Heart right ventricle (tissue), 16 donors: ENCODE measurements at regions of chr1 and their contacts with region 1.

Region 1: DNA sequence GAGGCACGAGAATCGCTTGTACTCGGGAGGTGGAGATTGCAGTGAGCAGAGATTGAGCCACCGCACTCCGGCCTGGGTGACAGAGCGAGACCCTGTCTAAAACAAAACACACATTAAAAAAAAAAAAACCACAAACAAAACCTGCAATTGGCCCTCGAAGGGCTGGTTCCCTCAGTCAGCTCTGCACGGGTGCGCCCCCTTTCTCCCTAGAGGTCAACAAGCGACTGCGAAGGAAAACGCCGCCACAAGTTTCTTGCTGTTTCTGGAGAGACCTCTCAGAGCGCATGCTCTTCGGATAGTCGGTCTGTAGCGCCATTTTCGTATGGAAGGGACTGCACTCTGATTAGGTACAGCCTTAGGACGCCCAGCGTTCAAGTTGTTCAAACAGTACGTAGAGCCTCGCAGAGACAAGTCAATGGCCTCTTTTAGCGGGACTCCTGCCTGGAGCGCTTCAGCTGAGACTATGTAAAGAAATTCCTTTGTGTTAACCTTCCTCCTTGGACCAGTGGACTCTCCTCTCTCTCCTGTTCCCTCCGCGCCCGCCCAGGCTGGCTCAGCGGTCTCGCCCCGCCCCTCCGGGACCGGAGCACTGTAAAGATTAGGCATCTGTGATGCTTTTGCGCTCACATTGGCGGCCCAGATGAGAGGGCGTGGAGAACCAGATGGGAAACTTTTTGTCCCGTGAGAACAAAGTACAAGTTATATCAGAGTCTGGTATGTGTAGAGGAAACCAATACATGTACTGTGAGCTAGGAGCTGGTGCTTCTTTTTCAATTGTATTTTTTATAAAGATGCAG is 1.0 kb upstream of the CDC14A start:
- DNase-seq: peak; percentile 86 to 87
- ATAC-seq: peak; percentile 63 to 88 (median 83)
- H3K4me3 ChIP-seq: peak overlapping the region; percentile 67 to 97 (median 90)
- H3K27ac ChIP-seq: peak overlapping the region; percentile 57 to 95 (median 89)
- H3K4me1 ChIP-seq: peaks cover 3 to 36% (median 32%) of the 10 kb centered on the region in 9 donors
- H3K27me3 ChIP-seq: no peaks in the 10 kb centered on the region
- CTCF ChIP-seq: peak in 7 of 9 donors; percentile 33 to 63 (median 45)

Region 2: DNA sequence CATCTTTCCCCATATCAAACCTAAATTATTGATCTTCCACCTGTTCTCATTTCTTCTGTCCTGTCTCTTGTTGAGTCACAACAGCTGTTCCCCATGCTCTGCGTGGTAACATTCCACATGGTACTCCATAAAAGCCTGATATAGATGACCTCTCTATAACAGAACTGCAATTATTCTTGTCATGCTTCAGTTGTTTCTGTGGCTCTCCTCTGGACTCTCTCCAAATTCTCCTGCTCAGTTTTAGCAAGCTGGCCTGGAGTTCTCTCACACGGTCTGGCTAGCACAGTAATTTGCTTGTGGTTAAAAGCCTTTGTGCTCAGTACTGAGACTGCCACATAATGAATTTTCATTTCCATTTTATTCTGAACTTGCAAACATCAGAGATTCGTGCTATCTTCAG is 162.7 kb before region 1 on chr1:
- intact Hi-C with region 1: no loop called
- DNase-seq: peak in 1 of 2 donors; percentile 40
- ATAC-seq: peak; percentile 80 to 94 (median 86)
- H3K4me3 ChIP-seq: peak overlapping the region in 1 of 10 donors; percentile 7
- H3K27ac ChIP-seq: peak overlapping the region; percentile 57 to 91 (median 76)
- H3K4me1 ChIP-seq: peaks cover 0 to 21% (median 8%) of the 10 kb centered on the region in 9 donors
- H3K27me3 ChIP-seq: no peaks in the 10 kb centered on the region
- CTCF ChIP-seq: no peak

Region 3: GRCh38 chr1:100265931-100266740 is 85.2 kb before region 1 on chr1 and contains the start of gene RTCA:
- intact Hi-C with region 1: loop called in 3 of 10 experiments (anchors 1 to 10 kb)
- DNase-seq: peak; percentile 96 to 98
- ATAC-seq: peak; percentile 99 to 100 (median 100)
- H3K4me3 ChIP-seq: peak within 1 kb of the TSS; percentile 59 to 99 (median 96)
- H3K27ac ChIP-seq: peak within 1 kb of the TSS in 9 of 10 donors; percentile 79 to 97 (median 88)
- H3K4me1 ChIP-seq: peaks cover 4 to 42% (median 35%) of the 10 kb centered on the region in 9 donors
- H3K27me3 ChIP-seq: no peaks in the 10 kb centered on the region
- CTCF ChIP-seq: no peak
- total RNA-seq, gene RTCA: 30.1 to 44.8 (median 36.9) TPM

Region 4: GRCh38 chr1:100396651-100397050 is 45.4 kb after region 1 on chr1:
- intact Hi-C with region 1: loop called in 2 of 10 experiments (anchors 5 kb)
- DNase-seq: no peak
- ATAC-seq: no peak
- H3K4me3 ChIP-seq: no peak overlapping the region
- H3K27ac ChIP-seq: peak overlapping the region in 1 of 10 donors; percentile 73
- H3K4me1 ChIP-seq: peaks cover 0 to 75% (median 15%) of the 10 kb centered on the region in 9 donors
- H3K27me3 ChIP-seq: no peaks in the 10 kb centered on the region
- CTCF ChIP-seq: peak in 2 of 9 donors; percentile 24 to 25

Region 5: DNA sequence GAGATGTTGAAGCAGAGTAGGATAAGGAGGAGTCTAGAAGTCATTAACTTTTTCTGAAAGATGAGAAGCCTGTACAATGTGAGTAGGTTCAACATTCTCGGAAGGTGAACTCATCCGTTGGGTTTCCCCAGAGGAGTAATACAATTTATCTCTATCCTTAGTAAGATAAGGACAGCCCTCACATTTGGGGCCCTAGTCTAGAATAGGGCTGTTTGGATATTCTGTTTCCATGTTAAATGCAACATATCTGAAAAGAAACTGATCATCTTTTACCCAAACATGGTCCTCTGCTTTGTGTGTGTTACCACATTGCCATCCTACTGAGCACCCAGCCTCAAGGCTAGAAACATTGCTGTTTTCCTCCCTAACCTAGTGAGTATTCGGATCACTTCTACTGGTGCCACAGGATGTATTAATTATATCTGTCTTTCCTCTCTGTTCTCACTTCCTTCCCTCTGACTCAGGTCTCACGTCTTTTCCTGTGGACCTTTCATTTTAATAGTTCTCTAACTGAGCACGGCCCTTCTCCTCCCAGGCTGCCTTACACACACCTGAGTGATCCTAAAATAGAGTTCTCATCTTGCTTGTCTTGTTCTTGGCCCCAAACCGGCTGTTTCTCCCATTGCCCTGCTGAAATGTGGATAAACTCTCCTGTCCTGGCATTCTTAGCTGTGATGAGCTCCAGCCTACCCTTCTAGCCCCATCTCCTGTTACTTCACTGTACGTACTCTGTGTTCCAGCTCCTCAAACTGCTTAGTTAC is 92.7 kb after region 1 on chr1:
- intact Hi-C with region 1: loop called in 6 of 10 experiments (anchors 5 to 10 kb)
- DNase-seq: no peak
- ATAC-seq: peak in 7 of 8 donors; percentile 43 to 91 (median 59)
- H3K4me3 ChIP-seq: no peak overlapping the region
- H3K27ac ChIP-seq: peak overlapping the region in 8 of 10 donors; percentile 27 to 74 (median 55)
- H3K4me1 ChIP-seq: peaks cover 0 to 61% (median 18%) of the 10 kb centered on the region in 9 donors
- H3K27me3 ChIP-seq: no peaks in the 10 kb centered on the region
- CTCF ChIP-seq: peak in 1 of 9 donors; percentile 14

Region 6: GRCh38 chr1:100895540-100896483 is 544.5 kb after region 1 on chr1 and contains the start of gene SLC30A7:
- intact Hi-C with region 1: loop called in 1 of 10 experiments (anchors 10 kb)
- DNase-seq: peak; percentile 96 to 97
- ATAC-seq: peak; percentile 95 to 97 (median 97)
- H3K4me3 ChIP-seq: peak within 1 kb of the TSS; percentile 62 to 93 (median 79)
- H3K27ac ChIP-seq: peak within 1 kb of the TSS; percentile 74 to 97 (median 95)
- H3K4me1 ChIP-seq: peaks cover 3 to 37% (median 22%) of the 10 kb centered on the region in 9 donors
- H3K27me3 ChIP-seq: no peaks in the 10 kb centered on the region
- CTCF ChIP-seq: no peak
- total RNA-seq, gene SLC30A7: 4.0 to 16.2 (median 5.8) TPM